AG04450 (cell line): ENCODE measurements at regions of chr1 and their contacts with region 1.

Region 1: GRCh38 chr1:177948336-177948972 is 21.4 kb downstream of the SEC16B start:
- DNase-seq: no peak
- H3K4me3 ChIP-seq: no peak overlapping the region
- H3K27ac ChIP-seq: no peak overlapping the region
- H3K27me3 ChIP-seq: no peaks in the 10 kb centered on the region
- CTCF ChIP-seq: peak; percentile 98

Region 2: GRCh38 chr1:176897350-176898236 is 1050.9 kb before region 1 on chr1:
- CTCF ChIA-PET with region 1: interaction called, 28 read pairs
- POLR2A ChIA-PET with region 1: no interaction called
- DNase-seq: peak; percentile 18
- H3K4me3 ChIP-seq: no peak overlapping the region
- H3K27ac ChIP-seq: no peak overlapping the region
- H3K27me3 ChIP-seq: no peaks in the 10 kb centered on the region
- CTCF ChIP-seq: peak; percentile 81

Region 3: GRCh38 chr1:177928194-177928593 is 20.3 kb before region 1 on chr1:
- CTCF ChIA-PET with region 1: interaction called, 26 read pairs
- POLR2A ChIA-PET with region 1: no interaction called
- DNase-seq: no peak
- H3K4me3 ChIP-seq: no peak overlapping the region
- H3K27ac ChIP-seq: no peak overlapping the region
- H3K27me3 ChIP-seq: no peaks in the 10 kb centered on the region
- CTCF ChIP-seq: peak; percentile 45

Region 4: GRCh38 chr1:177937931-177938330 is 10.5 kb before region 1 on chr1:
- CTCF ChIA-PET with region 1: interaction called, 20 read pairs
- POLR2A ChIA-PET with region 1: no interaction called
- DNase-seq: peak; percentile 55
- H3K4me3 ChIP-seq: no peak overlapping the region
- H3K27ac ChIP-seq: peak overlapping the region; percentile 4
- H3K27me3 ChIP-seq: no peaks in the 10 kb centered on the region
- CTCF ChIP-seq: no peak

Region 5: GRCh38 chr1:178282949-178283367 is 334.5 kb after region 1 on chr1:
- CTCF ChIA-PET with region 1: interaction called, 30 read pairs
- POLR2A ChIA-PET with region 1: no interaction called
- DNase-seq: peak; percentile 38
- H3K4me3 ChIP-seq: no peak overlapping the region
- H3K27ac ChIP-seq: no peak overlapping the region
- H3K27me3 ChIP-seq: no peaks in the 10 kb centered on the region
- CTCF ChIP-seq: peak; percentile 73